Left ventricle myocardium inferior (tissue), 1 donor: ENCODE measurements at regions of chr16 and their contacts with region 1.

Region 1: GRCh38 chr16:22001591-22001990 is 675 bp upstream of the PDZD9 start:
- DNase-seq: no peak
- H3K4me3 ChIP-seq: no peak overlapping the region
- H3K27ac ChIP-seq: no peak overlapping the region
- H3K4me1 ChIP-seq: peaks cover 19% of the 10 kb centered on the region
- H3K27me3 ChIP-seq: no peaks in the 10 kb centered on the region
- CTCF ChIP-seq: no peak

Region 2: DNA sequence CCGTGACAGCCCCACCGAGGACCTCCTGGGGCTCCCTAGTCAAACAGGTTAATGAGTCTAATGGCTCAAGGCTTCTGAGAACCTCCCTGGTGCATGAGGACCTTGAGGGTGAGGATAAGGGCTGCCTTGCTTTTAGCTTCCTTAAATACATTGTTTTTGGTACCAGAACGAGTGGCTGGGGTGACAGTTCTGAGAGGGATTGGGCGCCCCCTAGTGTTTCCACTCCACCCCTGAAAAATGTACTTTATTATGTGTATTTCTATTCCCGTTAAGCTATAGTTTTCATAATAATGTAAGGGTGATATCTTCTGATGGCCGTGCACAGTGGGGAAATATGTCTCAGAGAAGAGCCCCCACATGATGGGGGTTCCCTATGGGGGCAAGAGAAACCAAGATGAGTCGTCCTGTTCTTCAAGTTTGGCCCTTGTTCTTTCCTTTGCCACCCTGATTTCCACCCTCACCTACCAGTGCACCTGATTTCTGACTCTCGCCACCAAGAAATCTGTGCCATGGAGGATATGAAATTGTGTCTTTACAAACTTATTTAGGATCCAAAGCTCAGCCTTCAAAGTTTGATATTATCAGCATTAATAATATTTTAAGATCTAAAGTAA is 76.2 kb after region 1 on chr16:
- intact Hi-C with region 1: loop called (anchors 5 kb)
- DNase-seq: peak; percentile 41
- H3K4me3 ChIP-seq: no peak overlapping the region
- H3K27ac ChIP-seq: no peak overlapping the region
- H3K4me1 ChIP-seq: peaks cover 16% of the 10 kb centered on the region
- H3K27me3 ChIP-seq: no peaks in the 10 kb centered on the region
- CTCF ChIP-seq: peak; percentile 90

Region 3: GRCh38 chr16:22188595-22189442 is 187.2 kb after region 1 on chr16:
- intact Hi-C with region 1: loop called (anchors 5 kb)
- DNase-seq: peak; percentile 43
- H3K4me3 ChIP-seq: peak overlapping the region; percentile 92
- H3K27ac ChIP-seq: peak overlapping the region; percentile 95
- H3K4me1 ChIP-seq: peaks cover 43% of the 10 kb centered on the region
- H3K27me3 ChIP-seq: no peaks in the 10 kb centered on the region
- CTCF ChIP-seq: peak; percentile 87